Posterior vena cava (tissue), 2 donors: ENCODE measurements at regions of chr9 and their contacts with region 1.

Region 1: GRCh38 chr9:128656416-128657343 is at the start of gene DYNC2I2:
- DNase-seq: peak; percentile 99
- total RNA-seq, gene DYNC2I2: 18.1 to 19.4 TPM

Region 2: GRCh38 chr9:128621730-128622455 is 34.8 kb before region 1 on chr9:
- intact Hi-C with region 1: no loop called
- DNase-seq: no peak

Region 3: DNA sequence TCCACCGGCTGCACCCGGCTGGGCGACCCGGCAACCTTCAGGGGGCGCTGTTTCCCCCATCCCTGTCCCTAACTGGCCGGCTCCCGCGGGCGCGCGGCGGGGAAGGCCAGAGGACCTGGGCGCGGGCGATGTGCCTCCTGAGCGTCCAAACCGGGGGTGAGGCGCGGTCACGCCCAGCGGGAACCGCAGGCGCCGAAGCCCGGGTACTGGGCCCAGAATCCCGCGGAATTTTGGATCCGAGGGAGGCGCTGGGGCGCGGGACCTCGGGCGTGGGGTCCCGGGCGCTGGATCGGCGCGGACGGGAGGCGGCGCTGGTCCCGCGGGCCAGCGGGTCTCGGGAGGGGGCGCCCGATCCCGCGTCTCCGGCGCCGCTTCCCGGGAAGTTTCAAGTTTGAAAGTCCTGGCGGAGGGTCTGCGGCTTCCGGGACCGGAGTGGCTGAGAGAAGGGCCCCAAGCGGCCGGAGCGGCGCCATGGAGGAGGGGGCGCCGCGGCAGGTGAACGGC is 45.8 kb after region 1 on chr9 and contains the start of gene PKN3:
- intact Hi-C with region 1: loop called in 1 of 2 experiments (anchors 10 kb)
- DNase-seq: peak; percentile 95
- total RNA-seq, gene PKN3: 8.8 to 11.4 TPM

Region 4: DNA sequence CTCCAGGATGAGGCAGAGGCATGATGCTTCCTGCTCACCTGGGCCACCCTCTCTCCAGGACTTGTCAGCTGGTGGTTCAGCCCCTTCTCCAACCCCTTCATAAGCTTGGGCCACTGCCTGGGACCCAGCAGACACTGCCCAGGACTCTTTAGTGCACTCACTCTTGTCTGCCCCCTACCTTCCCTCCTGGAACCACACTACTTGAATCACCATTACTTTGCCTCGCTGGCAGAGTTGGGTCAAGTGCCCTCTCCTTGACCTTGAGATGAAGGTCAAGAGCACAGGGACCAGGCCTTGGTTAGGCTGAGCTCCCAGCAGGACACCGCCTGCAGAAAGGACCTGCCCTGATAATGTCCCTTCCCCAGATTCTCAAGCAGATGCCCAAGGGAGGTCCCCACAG is 153.2 kb after region 1 on chr9:
- intact Hi-C with region 1: no loop called
- DNase-seq: no peak